ENCODE measurements at regions of chr11 and their contacts with region 1.

Region 1: DNA sequence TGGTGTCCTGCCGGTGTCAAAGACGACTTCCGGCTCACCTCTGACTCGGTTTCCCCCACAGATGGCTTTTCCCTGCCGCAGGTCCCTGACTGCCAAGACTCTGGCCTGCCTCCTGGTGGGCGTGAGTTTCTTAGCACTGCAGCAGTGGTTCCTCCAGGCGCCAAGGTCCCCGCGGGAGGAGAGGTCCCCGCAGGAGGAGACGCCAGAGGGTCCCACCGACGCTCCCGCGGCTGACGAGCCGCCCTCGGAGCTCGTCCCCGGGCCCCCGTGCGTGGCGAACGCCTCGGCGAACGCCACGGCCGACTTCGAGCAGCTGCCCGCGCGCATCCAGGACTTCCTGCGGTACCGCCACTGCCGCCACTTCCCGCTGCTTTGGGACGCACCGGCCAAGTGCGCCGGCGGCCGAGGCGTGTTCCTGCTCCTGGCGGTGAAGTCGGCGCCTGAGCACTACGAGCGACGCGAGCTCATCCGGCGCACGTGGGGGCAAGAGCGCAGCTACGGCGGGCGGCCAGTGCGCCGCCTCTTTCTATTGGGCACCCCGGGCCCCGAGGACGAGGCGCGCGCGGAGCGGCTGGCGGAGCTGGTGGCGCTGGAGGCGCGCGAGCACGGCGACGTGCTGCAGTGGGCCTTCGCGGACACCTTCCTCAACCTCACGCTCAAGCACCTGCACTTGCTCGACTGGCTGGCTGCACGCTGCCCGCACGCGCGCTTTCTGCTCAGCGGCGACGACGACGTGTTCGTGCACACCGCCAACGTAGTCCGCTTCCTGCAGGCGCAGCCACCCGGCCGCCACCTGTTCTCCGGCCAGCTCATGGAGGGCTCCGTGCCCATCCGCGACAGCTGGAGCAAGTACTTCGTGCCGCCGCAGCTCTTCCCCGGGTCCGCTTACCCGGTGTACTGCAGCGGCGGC is 5.5 kb downstream of the B3GNT6 start:
- DNase-seq: peak; percentile 73
- H3K4me3 ChIP-seq: peak overlapping the region; percentile 34
- H3K27ac ChIP-seq: no peak overlapping the region
- H3K4me1 ChIP-seq: no peaks in the 10 kb centered on the region
- H3K27me3 ChIP-seq: peaks cover 6% of the 10 kb centered on the region
- CTCF ChIP-seq: peak; percentile 37

Region 2: DNA sequence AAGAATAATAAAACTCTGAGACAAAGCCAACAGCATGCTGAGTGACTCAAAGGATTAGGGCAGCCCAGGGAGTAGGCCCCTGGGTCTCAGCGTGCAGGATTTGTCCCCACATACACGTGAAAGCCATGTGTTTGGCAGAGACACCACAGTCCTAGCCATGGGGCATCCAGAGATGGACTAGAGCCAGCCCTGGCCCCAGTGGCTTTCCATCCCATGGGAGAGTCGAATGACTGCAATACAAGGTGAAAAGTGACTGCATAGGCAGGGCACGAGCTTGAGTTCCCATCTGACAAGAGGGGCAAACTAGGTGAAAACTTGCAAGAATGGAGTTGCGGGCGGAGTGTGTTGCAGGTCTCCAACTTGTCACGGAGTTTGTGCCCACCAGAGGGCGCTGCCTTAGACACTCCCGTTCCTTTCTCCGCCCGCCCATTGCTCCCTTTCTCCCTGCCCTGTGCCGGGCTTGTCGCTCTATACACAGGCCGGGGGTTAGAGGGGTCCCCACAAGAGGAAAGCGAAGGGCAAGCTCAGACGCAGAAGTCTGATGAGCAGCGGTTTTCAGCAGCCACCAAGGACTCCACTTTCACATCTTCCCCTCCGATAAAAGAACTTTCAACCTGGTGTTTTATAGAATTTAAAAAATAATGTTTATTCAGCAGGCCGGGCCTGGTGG is 232.4 kb before region 1 on chr11:
- intact Hi-C with region 1: loop called (anchors 5 kb)
- DNase-seq: peak; percentile 90
- H3K4me3 ChIP-seq: no peak overlapping the region
- H3K27ac ChIP-seq: no peak overlapping the region
- H3K4me1 ChIP-seq: no peaks in the 10 kb centered on the region
- H3K27me3 ChIP-seq: no peaks in the 10 kb centered on the region
- CTCF ChIP-seq: peak; percentile 68

Region 3: DNA sequence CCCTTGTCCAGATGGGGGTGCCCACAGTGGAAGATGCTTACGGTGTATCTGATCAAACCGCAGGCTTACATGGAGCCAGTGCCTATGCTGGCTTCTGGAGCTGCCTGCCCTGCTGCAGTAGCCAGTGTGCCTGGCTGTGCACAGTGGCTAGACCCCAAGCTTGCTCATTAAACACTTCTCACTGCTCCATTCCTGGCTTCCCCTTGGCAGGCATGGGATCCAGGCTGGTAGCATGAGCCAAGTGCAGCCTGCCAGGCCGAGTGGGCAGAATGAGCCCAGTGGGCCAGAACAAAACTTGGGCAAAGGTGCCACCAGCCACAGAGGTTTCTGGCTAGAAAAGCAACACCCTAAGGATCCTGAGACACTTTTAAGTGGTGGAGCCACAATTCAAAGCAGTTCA is 60.9 kb before region 1 on chr11:
- intact Hi-C with region 1: loop called (anchors 5 kb)
- DNase-seq: no peak
- H3K4me3 ChIP-seq: no peak overlapping the region
- H3K27ac ChIP-seq: no peak overlapping the region
- H3K4me1 ChIP-seq: no peaks in the 10 kb centered on the region
- H3K27me3 ChIP-seq: no peaks in the 10 kb centered on the region
- CTCF ChIP-seq: no peak

Region 4: DNA sequence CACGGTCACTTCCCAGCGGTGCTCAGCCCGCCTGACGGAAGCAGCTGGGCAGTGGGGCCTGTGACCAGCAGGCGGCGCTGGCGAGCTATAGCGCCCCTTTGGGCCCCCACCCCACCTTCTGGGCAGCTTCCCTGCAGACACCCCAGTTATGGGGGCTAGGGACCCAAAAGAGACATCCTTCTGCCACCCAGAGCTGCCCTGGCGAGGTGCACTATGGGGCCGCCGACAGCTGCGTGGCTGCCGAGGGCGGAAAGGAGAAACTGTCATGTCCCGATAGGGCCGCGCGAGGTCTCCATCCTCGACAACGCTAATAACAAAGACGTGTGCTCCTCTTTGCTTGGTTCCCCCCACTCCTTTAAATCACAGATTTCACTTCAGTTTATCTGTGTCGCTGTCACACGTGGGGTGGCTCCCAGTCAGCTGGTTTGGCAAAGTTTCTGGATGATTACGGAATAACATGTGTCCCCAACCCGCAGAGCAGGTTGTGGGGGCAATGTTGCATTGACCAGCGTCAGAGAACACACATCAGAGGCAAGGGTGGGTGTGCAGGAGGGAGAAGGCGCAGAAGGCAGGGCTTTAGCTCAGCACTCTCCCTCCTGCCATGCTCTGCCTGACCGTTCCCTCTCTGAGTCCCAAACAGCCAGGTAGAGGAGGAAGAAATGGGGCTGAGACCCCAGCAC is 87.6 kb after region 1 on chr11:
- intact Hi-C with region 1: no loop called
- DNase-seq: peak; percentile 70
- H3K4me3 ChIP-seq: peak overlapping the region; percentile 31
- H3K27ac ChIP-seq: no peak overlapping the region
- H3K4me1 ChIP-seq: peaks cover 8% of the 10 kb centered on the region
- H3K27me3 ChIP-seq: no peaks in the 10 kb centered on the region
- CTCF ChIP-seq: peak; percentile 99

Region 5: GRCh38 chr11:77151804-77152509 is 112.2 kb after region 1 on chr11:
- intact Hi-C with region 1: no loop called
- DNase-seq: no peak
- H3K4me3 ChIP-seq: no peak overlapping the region
- H3K27ac ChIP-seq: no peak overlapping the region
- H3K4me1 ChIP-seq: no peaks in the 10 kb centered on the region
- H3K27me3 ChIP-seq: no peaks in the 10 kb centered on the region
- CTCF ChIP-seq: no peak

Measured in colonic mucosa (tissue), 4 donors.